ENCODE measurements at regions of chr6 and their contacts with region 1.

Region 1: DNA sequence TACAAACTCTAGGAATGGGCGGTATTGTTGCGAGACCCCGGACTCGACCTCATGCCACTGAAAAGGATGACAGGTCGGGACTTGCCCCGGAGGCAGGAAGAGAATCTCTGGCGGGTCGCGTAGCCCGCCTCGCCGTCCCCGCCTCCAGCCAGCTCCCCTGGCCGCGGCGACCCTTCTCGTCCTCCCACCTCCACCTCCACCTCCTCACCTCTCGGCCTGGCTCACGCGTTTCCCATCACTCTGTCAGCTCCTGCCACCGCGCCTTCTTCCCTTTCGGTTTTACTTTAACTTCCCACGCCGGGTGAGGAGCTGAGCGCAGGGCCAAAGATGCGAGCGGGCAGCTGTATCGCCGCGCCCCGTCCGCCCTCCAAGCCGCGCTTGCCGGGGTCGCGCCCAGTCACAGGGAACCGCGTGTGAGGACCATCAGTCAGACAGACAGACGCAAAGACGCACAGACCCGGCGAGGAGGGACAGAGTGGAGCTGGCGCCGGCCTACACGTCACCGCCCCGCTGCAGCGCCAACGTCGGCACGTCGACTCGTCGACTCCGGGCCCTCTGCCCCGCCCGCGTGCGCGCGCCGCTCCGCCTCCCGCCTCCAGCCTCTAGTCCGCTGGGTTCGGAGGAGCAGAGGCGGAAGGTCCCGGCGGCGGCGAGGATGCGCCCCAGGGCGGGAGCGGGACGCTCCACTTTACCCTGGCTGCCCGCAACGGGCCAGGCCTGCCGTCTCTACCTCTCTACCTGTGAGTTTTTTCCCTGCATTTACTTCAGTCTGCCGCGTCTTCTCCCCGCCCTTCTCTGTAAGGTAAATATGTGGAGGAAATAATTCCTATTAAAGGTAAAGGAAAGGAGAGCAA is at the start of gene ASCC3:
- DNase-seq: peak; percentile 92
- H3K4me3 Mint-ChIP-seq: peak within 1 kb of the TSS; percentile 100
- H3K27ac Mint-ChIP-seq: peak within 1 kb of the TSS; percentile 99
- H3K4me1 Mint-ChIP-seq: peaks cover 36% of the 10 kb centered on the region
- H3K27me3 Mint-ChIP-seq: no peaks in the 10 kb centered on the region
- CTCF ChIP-seq: no peak
- total RNA-seq, gene ASCC3: 64.9 and 85.0 TPM in 2 replicates

Region 2: DNA sequence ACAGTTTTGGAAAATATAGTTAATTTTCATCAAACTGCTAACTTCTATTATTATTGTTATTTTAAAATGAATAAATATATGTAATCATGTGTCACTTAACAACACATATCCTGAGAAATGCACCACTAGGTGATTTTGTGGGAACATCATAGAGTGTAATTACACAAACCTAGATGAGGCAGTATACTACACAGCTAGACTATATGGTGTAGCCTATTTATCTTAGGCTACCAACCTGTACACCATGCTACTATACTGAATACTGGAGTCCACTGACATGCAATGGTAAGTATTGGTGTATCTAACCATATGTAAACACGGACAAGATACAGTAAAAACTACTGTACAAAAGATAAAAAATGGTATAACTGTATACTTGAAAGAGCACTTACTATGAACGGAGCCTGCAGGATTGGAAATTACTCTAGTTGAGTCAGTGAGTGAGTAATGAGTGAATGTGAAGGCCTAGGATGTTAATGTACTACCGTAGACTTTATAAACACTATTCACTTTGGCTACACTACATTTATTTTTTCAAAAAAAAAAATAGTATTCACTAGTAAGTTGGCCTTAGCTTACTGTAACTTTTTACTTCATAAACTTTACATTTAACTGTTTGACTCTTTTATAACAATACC is 72.3 kb before region 1 on chr6:
- CTCF ChIA-PET with region 1: no interaction called
- POLR2A ChIA-PET with region 1: no interaction called
- intact Hi-C with region 1: no loop called
- DNase-seq: peak; percentile 35
- H3K4me3 Mint-ChIP-seq: no peak overlapping the region
- H3K27ac Mint-ChIP-seq: no peak overlapping the region
- H3K4me1 Mint-ChIP-seq: peaks cover 15% of the 10 kb centered on the region
- H3K27me3 Mint-ChIP-seq: no peaks in the 10 kb centered on the region
- CTCF ChIP-seq: no peak

Region 3: DNA sequence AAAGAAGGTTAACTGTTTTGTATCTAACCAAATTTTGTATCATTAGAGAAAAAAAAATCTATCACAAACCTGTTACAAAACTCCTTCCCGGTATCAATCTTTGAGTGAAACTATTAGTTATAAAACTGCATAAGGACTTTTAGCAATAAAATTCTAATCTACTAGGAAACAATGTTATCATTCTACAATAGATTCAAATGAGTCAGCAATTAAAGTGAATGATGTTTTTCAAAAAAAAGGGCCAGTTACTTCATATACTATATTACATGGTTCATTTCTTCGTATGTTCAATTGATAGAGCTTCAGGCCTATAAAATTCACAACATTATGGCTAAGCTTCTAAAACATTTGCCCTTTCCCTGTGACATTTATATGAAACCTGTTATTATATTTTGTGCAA is 15.6 kb before region 1 on chr6:
- CTCF ChIA-PET with region 1: no interaction called
- POLR2A ChIA-PET with region 1: interaction called, 33 read pairs
- intact Hi-C with region 1: no loop called
- DNase-seq: no peak
- H3K4me3 Mint-ChIP-seq: no peak overlapping the region
- H3K27ac Mint-ChIP-seq: no peak overlapping the region
- H3K4me1 Mint-ChIP-seq: peaks cover 14% of the 10 kb centered on the region
- H3K27me3 Mint-ChIP-seq: no peaks in the 10 kb centered on the region
- CTCF ChIP-seq: no peak

Region 4: GRCh38 chr6:100923481-100924165 is 42.5 kb after region 1 on chr6:
- CTCF ChIA-PET with region 1: interaction called, 4 read pairs
- POLR2A ChIA-PET with region 1: interaction called, 13 read pairs
- intact Hi-C with region 1: no loop called
- DNase-seq: no peak
- H3K4me3 Mint-ChIP-seq: no peak overlapping the region
- H3K27ac Mint-ChIP-seq: no peak overlapping the region
- H3K4me1 Mint-ChIP-seq: peaks cover 14% of the 10 kb centered on the region
- H3K27me3 Mint-ChIP-seq: no peaks in the 10 kb centered on the region
- CTCF ChIP-seq: no peak

Region 5: GRCh38 chr6:100998111-100998510 is 117.0 kb after region 1 on chr6:
- CTCF ChIA-PET with region 1: no interaction called
- POLR2A ChIA-PET with region 1: interaction called, 10 read pairs
- intact Hi-C with region 1: no loop called
- DNase-seq: no peak
- H3K4me3 Mint-ChIP-seq: no peak overlapping the region
- H3K27ac Mint-ChIP-seq: peak overlapping the region; percentile 65
- H3K4me1 Mint-ChIP-seq: peaks cover 21% of the 10 kb centered on the region
- H3K27me3 Mint-ChIP-seq: no peaks in the 10 kb centered on the region
- CTCF ChIP-seq: no peak

Region 6: DNA sequence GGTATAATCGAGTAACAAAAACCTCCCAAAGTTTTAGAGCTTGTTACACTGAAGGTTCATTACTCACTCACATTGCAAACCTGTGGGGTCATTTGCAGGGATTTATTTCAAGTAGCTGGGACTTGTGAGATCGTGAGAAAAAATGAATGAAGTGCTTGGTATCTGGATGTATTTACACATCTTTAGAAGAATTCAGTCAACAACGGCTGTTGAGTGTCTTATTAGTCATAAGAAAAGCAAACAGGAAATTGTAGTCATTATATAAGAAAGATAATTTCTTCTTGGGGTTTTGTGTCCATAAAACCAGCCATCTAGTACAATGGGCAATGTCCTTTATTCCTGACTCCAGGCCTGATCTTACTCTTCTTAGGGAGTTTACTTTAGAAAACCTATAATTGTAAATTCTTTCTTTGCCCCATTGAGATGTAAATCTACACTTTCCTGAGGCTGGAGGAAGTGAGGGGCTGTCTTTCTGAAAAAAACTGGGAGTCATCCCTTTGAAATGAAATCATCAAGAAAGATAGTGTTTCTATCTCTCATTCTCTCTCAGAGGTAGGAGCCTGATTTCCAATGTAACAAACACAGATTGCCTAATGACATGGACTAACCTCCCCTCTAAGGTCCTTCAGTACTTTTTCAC is 202.6 kb after region 1 on chr6:
- CTCF ChIA-PET with region 1: no interaction called
- POLR2A ChIA-PET with region 1: interaction called, 12 read pairs
- intact Hi-C with region 1: loop called (anchors 5 kb)
- DNase-seq: peak; percentile 81
- H3K4me3 Mint-ChIP-seq: no peak overlapping the region
- H3K27ac Mint-ChIP-seq: peak overlapping the region; percentile 52
- H3K4me1 Mint-ChIP-seq: peaks cover 28% of the 10 kb centered on the region
- H3K27me3 Mint-ChIP-seq: no peaks in the 10 kb centered on the region
- CTCF ChIP-seq: no peak